H1 (cell line): ENCODE measurements at regions of chr6 and their contacts with region 1.

Region 1: GRCh38 chr6:138211027-138211581 is 7.2 kb downstream of the PBOV1 start:
- DNase-seq: no peak
- H3K4me3 ChIP-seq: no peak overlapping the region
- H3K27ac ChIP-seq: no peak overlapping the region
- H3K4me1 ChIP-seq: peaks cover 0 to 4% (median 0%) of the 10 kb centered on the region in 4 experiments; a peak in 1 of 7 replicates
- H3K27me3 ChIP-seq: no peaks in the 10 kb centered on the region
- CTCF ChIP-seq: peak in 2 of 3 experiments; percentile 51 to 64; a peak in 3 of 4 replicates
- EP300 ChIP-seq: no peak
- POLR2A ChIP-seq: no peak
- RAD21 ChIP-seq: peak; percentile 72 to 75

Region 2: DNA sequence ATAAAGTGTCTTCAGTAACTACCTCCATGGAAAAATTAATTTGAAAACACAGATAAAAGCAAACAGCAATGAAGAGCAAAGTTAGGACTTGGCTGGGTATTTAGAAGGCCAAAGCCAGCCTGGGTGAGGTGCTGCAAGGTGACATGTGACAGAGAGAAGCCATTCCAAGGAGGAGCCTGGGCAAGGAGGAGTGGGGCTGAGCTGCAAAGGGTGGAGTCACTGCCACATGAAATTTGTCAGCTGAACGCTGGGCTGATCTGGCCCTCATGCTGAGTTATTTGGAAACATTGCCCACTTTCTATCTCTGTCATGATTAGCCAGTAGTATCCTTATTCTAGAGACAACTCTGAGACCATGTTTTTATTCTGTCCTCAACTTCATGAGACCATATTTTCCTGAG is 180.2 kb before region 1 on chr6:
- CTCF ChIA-PET with region 1: no interaction called
- POLR2A ChIA-PET with region 1: no interaction called
- DNase-seq: no peak
- H3K4me3 ChIP-seq: no peak overlapping the region
- H3K27ac ChIP-seq: no peak overlapping the region
- H3K4me1 ChIP-seq: no peaks in the 10 kb centered on the region
- H3K27me3 ChIP-seq: no peaks in the 10 kb centered on the region
- CTCF ChIP-seq: no peak
- EP300 ChIP-seq: no peak
- POLR2A ChIP-seq: no peak
- RAD21 ChIP-seq: no peak

Region 3: DNA sequence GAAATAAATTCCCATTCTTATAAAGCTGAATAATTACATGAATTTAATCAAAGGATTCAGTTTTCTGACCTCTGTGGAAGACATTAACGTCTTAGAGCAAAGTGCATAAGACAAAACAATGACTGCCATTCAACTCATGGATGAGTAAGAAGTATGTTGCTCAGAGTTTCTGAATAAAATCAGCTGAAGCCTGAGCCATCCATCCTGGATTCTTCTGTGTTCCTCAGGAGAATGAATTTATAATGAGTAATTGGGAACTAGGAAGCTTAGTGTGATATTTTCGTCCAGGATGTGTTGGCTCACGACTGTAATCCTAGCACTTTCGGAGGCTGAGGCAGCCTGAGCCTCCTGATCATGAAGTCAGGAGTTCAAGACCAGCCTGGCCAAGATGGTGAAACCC is 166.6 kb before region 1 on chr6:
- CTCF ChIA-PET with region 1: no interaction called
- POLR2A ChIA-PET with region 1: no interaction called
- DNase-seq: no peak
- H3K4me3 ChIP-seq: no peak overlapping the region
- H3K27ac ChIP-seq: no peak overlapping the region
- H3K4me1 ChIP-seq: no peaks in the 10 kb centered on the region
- H3K27me3 ChIP-seq: no peaks in the 10 kb centered on the region
- CTCF ChIP-seq: no peak
- EP300 ChIP-seq: no peak
- POLR2A ChIP-seq: no peak
- RAD21 ChIP-seq: no peak

Region 4: GRCh38 chr6:138182939-138183789 is 27.9 kb before region 1 on chr6:
- CTCF ChIA-PET with region 1: interaction called, 16 read pairs
- POLR2A ChIA-PET with region 1: no interaction called
- DNase-seq: peak in 1 of 2 experiments; percentile 55
- H3K4me3 ChIP-seq: peak overlapping the region in 1 of 4 experiments; percentile 23; a peak in 1 of 8 replicates
- H3K27ac ChIP-seq: peak overlapping the region; percentile 68
- H3K4me1 ChIP-seq: peaks cover 7 to 19% (median 13%) of the 10 kb centered on the region in 4 experiments
- H3K27me3 ChIP-seq: no peaks in the 10 kb centered on the region
- CTCF ChIP-seq: no peak
- EP300 ChIP-seq: peak in 1 of 2 experiments; percentile 47; a peak in 1 of 3 replicates
- POLR2A ChIP-seq: no peak
- RAD21 ChIP-seq: no peak

Region 5: GRCh38 chr6:138188278-138188941 is 22.7 kb before region 1 on chr6:
- CTCF ChIA-PET with region 1: interaction called, 16 read pairs
- POLR2A ChIA-PET with region 1: interaction called, 3 read pairs
- DNase-seq: peak in 1 of 2 experiments; percentile 43
- H3K4me3 ChIP-seq: no peak overlapping the region
- H3K27ac ChIP-seq: no peak overlapping the region
- H3K4me1 ChIP-seq: peaks cover 6 to 14% (median 13%) of the 10 kb centered on the region in 4 experiments
- H3K27me3 ChIP-seq: no peaks in the 10 kb centered on the region
- CTCF ChIP-seq: no peak
- EP300 ChIP-seq: no peak
- POLR2A ChIP-seq: no peak
- RAD21 ChIP-seq: no peak

Region 6: DNA sequence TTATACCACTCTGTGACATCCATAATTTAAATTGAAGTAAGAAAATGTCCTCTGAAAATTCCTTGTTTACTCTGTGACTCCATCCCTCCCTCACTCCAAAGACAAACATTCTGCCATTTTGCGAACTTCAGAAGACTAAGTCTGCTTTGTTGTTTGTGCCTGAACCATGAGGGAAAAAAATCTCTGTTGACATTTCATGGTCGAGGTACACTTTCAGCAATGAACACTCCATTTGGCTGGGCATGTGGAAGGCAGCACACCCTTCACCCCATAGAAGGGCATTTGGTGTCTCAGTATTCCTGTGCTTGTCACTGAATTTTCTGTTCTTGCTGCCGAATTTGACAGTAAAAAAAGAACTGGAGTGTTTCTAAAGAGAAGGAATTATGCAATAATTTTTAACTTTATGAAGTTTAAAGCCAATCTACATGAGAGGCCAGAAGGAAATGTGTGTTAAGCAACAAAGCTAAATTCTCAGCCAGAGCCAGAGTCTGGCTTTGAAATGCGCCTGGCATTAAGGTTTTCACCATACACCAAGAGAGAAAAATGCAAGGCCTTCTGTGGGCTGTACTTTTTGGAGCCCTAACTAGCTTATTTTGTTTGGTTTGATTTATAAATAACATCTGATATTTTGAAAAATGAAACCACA is 11.9 kb after region 1 on chr6:
- CTCF ChIA-PET with region 1: interaction called, 30 read pairs
- POLR2A ChIA-PET with region 1: interaction called, 9 read pairs
- DNase-seq: no peak
- H3K4me3 ChIP-seq: no peak overlapping the region
- H3K27ac ChIP-seq: no peak overlapping the region
- H3K4me1 ChIP-seq: no peaks in the 10 kb centered on the region
- H3K27me3 ChIP-seq: no peaks in the 10 kb centered on the region
- CTCF ChIP-seq: no peak
- EP300 ChIP-seq: no peak
- POLR2A ChIP-seq: no peak
- RAD21 ChIP-seq: no peak